Activated CD8-positive, alpha-beta T cell treated with anti-CD3 and anti-CD28 coated beads for 36 hours (primary cell): ENCODE measurements at regions of chr17 and their contacts with region 1.

Region 1: DNA sequence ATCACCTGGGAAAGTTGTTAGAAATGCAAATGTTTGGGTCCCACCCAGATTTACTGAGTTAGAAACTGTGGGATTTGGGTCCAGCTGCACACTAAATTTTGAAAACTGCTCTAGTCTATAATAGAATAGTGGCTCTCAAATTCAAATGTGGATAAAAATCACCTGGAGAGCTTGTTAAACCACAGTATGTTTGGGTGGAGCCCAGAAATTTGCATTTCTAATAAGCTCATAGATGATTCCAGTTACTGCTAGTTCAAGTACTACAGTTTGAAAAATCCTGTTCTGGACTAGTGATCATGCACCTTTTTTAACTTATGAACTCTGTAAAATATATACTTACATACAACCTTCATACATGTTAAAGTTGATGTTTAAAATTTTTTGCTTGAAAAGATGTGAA is 27.8 kb downstream of the RABEP1 start:
- DNase-seq: no peak
- ATAC-seq: no peak
- H3K4me3 Mint-ChIP-seq: no peak overlapping the region
- H3K27ac Mint-ChIP-seq: no peak overlapping the region
- H3K4me1 Mint-ChIP-seq: peaks cover 27% of the 10 kb centered on the region
- H3K27me3 Mint-ChIP-seq: no peaks in the 10 kb centered on the region
- CTCF ChIP-seq: no peak

Region 2: GRCh38 chr17:5249615-5250014 is 60.2 kb before region 1 on chr17:
- CTCF ChIA-PET with region 1: interaction called, 25 read pairs
- POLR2A ChIA-PET with region 1: no interaction called
- intact Hi-C with region 1: no loop called
- DNase-seq: peak; percentile 83
- ATAC-seq: peak; percentile 93
- H3K4me3 Mint-ChIP-seq: no peak overlapping the region
- H3K27ac Mint-ChIP-seq: no peak overlapping the region
- H3K4me1 Mint-ChIP-seq: peaks cover 10% of the 10 kb centered on the region
- H3K27me3 Mint-ChIP-seq: no peaks in the 10 kb centered on the region
- CTCF ChIP-seq: peak; percentile 56